Mammary epithelial cell (primary cell): ENCODE measurements at regions of chr7 and their contacts with region 1.

Region 1: DNA sequence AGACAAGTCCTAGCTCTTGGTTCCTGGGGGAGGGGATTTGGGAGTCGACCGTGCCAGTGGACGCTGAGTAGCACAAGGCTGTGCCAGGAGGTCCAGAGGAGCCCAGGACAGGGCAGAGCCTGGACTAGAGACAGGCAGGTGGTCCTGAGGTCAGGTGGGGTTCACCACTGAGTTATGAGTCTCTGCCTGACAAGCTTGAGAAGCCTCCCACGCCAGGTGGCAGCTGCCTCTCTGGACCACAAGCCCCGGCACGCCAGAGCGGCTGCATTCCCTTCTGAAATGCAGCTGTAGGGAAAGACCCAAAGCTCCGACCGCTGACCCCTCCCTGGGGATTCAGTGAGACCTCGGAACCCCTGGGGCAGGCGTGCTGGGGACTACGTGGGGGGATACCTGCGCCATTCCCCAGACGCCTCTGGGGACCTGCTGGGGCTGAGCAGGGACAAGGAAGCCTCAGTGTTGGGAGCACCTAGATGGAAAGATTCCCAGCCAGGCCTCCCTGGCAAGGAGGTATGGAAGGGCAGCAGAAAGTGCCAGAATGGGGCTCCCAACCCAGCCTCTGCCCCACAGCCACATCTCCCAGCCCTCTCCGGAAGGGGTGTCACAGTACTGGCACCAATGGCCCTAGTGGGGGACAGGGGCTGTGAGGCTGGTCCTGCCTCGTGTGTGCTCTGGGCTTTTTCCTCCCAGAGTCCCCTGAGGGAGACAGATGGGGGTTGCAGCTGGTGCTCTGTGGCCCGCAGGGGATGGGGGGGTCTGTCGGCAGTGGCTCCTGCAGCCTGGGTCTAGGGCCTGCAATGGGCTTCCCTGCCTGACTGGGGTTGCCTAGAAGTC is 29.0 kb downstream of the PDGFA start:
- DNase-seq: peak; percentile 70
- H3K4me3 ChIP-seq: no peak overlapping the region
- H3K27ac ChIP-seq: no peak overlapping the region
- H3K4me1 ChIP-seq: peaks cover 31% of the 10 kb centered on the region
- H3K27me3 ChIP-seq: no peaks in the 10 kb centered on the region
- CTCF ChIP-seq: no peak

Region 2: GRCh38 chr7:311796-312195 is 178.9 kb before region 1 on chr7:
- CTCF ChIA-PET with region 1: no interaction called
- dilution Hi-C with region 1: no loop called
- in situ Hi-C with region 1: no loop called
- intact Hi-C with region 1: no loop called
- DNase-seq: peak; percentile 68
- H3K4me3 ChIP-seq: no peak overlapping the region
- H3K27ac ChIP-seq: no peak overlapping the region
- H3K4me1 ChIP-seq: peaks cover 11% of the 10 kb centered on the region
- H3K27me3 ChIP-seq: no peaks in the 10 kb centered on the region
- CTCF ChIP-seq: no peak

Region 3: GRCh38 chr7:362402-363096 is 128.1 kb before region 1 on chr7:
- CTCF ChIA-PET with region 1: no interaction called
- dilution Hi-C with region 1: loop called (anchors 10 kb)
- in situ Hi-C with region 1: no loop called
- intact Hi-C with region 1: loop called (anchors 5 kb)
- DNase-seq: no peak
- H3K4me3 ChIP-seq: no peak overlapping the region
- H3K27ac ChIP-seq: no peak overlapping the region
- H3K4me1 ChIP-seq: peaks cover 20% of the 10 kb centered on the region
- H3K27me3 ChIP-seq: no peaks in the 10 kb centered on the region
- CTCF ChIP-seq: no peak

Region 4: GRCh38 chr7:552868-553635 is 62.4 kb after region 1 on chr7:
- CTCF ChIA-PET with region 1: interaction called, 6 read pairs
- dilution Hi-C with region 1: loop called (anchors 5 kb)
- in situ Hi-C with region 1: no loop called
- intact Hi-C with region 1: no loop called
- DNase-seq: no peak
- H3K4me3 ChIP-seq: no peak overlapping the region
- H3K27ac ChIP-seq: no peak overlapping the region
- H3K4me1 ChIP-seq: no peaks in the 10 kb centered on the region
- H3K27me3 ChIP-seq: no peaks in the 10 kb centered on the region
- CTCF ChIP-seq: no peak

Region 5: DNA sequence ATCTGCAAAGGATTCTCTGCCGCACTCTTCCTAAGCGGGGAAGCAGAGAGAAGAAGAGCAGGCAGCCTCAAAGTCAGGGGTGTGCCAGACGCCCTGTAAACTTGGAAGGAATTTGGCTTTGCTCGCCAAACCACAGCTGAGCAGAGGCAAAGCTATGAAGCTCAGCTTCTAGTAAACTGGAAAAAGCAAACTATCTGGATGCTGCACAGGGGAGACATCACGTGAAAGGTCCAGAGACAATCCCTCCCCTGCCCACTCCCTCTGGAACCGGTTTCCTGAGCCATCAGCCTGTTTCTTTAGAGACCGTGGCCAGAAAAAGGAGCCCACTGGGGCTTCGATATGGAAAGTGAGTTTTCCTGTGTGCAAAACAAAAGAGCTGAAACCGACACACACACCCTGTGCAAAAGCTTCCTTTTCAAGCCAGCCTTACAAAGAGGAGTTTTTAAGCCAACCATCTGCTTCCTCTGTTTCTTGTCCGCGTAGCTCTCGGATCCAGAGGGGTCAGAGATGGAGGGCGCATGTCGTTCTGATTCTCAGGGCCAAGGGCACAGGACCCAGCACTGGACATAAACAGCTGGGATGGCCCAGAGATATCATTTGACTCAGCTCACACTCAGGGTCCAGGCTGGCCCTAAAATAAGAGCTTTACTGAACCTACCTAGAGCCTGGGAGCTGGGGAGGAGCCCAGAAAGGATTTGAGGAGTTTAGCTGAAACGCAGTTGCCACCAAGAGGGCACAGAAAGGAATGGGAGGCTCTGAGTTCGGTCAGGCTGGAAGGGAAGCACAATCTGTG is 177.7 kb after region 1 on chr7:
- CTCF ChIA-PET with region 1: no interaction called
- dilution Hi-C with region 1: loop called (anchors 5 kb)
- in situ Hi-C with region 1: no loop called
- intact Hi-C with region 1: no loop called
- DNase-seq: peak; percentile 14
- H3K4me3 ChIP-seq: no peak overlapping the region
- H3K27ac ChIP-seq: no peak overlapping the region
- H3K4me1 ChIP-seq: no peaks in the 10 kb centered on the region
- H3K27me3 ChIP-seq: no peaks in the 10 kb centered on the region
- CTCF ChIP-seq: no peak

Region 6: GRCh38 chr7:831596-832166 is 341.0 kb after region 1 on chr7:
- CTCF ChIA-PET with region 1: no interaction called
- dilution Hi-C with region 1: loop called (anchors 10 kb)
- in situ Hi-C with region 1: no loop called
- intact Hi-C with region 1: no loop called
- DNase-seq: peak; percentile 93
- H3K4me3 ChIP-seq: peak overlapping the region in 2 of 3 experiments; percentile 36 to 41
- H3K27ac ChIP-seq: peak overlapping the region; percentile 100
- H3K4me1 ChIP-seq: peaks cover 50% of the 10 kb centered on the region
- H3K27me3 ChIP-seq: no peaks in the 10 kb centered on the region
- CTCF ChIP-seq: no peak